Activated CD4-positive, alpha-beta T cell treated with anti-CD3 and anti-CD28 coated beads for 36 hours (primary cell): ENCODE measurements at regions of chr12 and their contacts with region 1.

Region 1: GRCh38 chr12:106871496-106871895 is 84.2 kb upstream of the TMEM263 start:
- DNase-seq: no peak
- ATAC-seq: no peak
- H3K4me3 Mint-ChIP-seq: no peak overlapping the region
- H3K27ac Mint-ChIP-seq: no peak overlapping the region
- H3K4me1 Mint-ChIP-seq: peaks cover 8% of the 10 kb centered on the region
- H3K27me3 Mint-ChIP-seq: no peaks in the 10 kb centered on the region

Region 2: DNA sequence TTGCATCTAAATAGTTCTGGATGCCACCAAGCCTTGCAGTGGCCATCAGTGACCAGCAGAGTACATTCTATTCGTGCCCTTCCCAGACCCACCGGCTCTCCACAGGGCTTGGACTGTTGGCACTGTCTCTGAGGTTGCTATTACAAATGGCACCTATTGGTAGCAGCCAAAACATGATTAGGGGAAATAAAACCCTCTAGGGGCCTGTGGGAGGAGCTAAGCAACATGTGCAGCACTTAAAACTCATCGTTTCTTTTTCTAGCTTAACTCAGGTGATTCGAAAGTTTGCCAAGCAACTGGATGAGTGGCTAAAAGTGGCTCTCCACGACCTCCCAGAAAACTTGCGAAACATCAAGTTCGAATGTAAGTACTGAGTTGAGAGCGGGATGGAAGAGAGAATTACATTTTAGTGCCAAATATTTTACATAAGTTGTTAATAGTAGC is 162.4 kb before region 1 on chr12:
- CTCF ChIA-PET with region 1: no interaction called
- POLR2A ChIA-PET with region 1: no interaction called
- intact Hi-C with region 1: no loop called
- DNase-seq: no peak
- ATAC-seq: no peak
- H3K4me3 Mint-ChIP-seq: no peak overlapping the region
- H3K27ac Mint-ChIP-seq: no peak overlapping the region
- H3K4me1 Mint-ChIP-seq: no peaks in the 10 kb centered on the region
- H3K27me3 Mint-ChIP-seq: no peaks in the 10 kb centered on the region

Region 3: GRCh38 chr12:106914796-106915634 is 43.5 kb after region 1 on chr12:
- CTCF ChIA-PET with region 1: no interaction called
- POLR2A ChIA-PET with region 1: no interaction called
- intact Hi-C with region 1: loop called in 1 of 2 experiments (anchors 2 kb)
- DNase-seq: peak; percentile 52
- ATAC-seq: peak; percentile 84
- H3K4me3 Mint-ChIP-seq: no peak overlapping the region
- H3K27ac Mint-ChIP-seq: peak overlapping the region; percentile 45
- H3K4me1 Mint-ChIP-seq: peaks cover 29% of the 10 kb centered on the region
- H3K27me3 Mint-ChIP-seq: no peaks in the 10 kb centered on the region